Naive thymus-derived CD4-positive, alpha-beta T cell (primary cell): ENCODE measurements at regions of chr5 and their contacts with region 1.

Region 1: GRCh38 chr5:94849821-94850736 is 231.6 kb downstream of the SLF1 start:
- DNase-seq: peak in 7 of 9 donors; percentile 3 to 42 (median 10)
- ATAC-seq: peak; percentile 87
- H3K4me3 ChIP-seq: no peak overlapping the region
- H3K4me3 Mint-ChIP-seq: no peak overlapping the region
- H3K27ac ChIP-seq: no peak overlapping the region
- H3K27ac Mint-ChIP-seq: no peak overlapping the region
- H3K4me1 ChIP-seq: no peaks in the 10 kb centered on the region
- H3K4me1 Mint-ChIP-seq: peaks cover 0 to 11% (median 0%) of the 10 kb centered on the region in 7 donors
- H3K27me3 ChIP-seq: no peaks in the 10 kb centered on the region
- H3K27me3 Mint-ChIP-seq: peaks cover 0 to 8% (median 5%) of the 10 kb centered on the region in 5 donors

Region 2: GRCh38 chr5:93915142-93915553 is 934.9 kb before region 1 on chr5:
- CTCF ChIA-PET with region 1: no interaction called
- POLR2A ChIA-PET with region 1: no interaction called
- intact Hi-C with region 1: loop called in 1 of 2 experiments (anchors 10 kb)
- DNase-seq: peak in 6 of 9 donors; percentile 4 to 46 (median 29)
- ATAC-seq: peak; percentile 54
- H3K4me3 ChIP-seq: no peak overlapping the region
- H3K4me3 Mint-ChIP-seq: no peak overlapping the region
- H3K27ac ChIP-seq: no peak overlapping the region
- H3K27ac Mint-ChIP-seq: no peak overlapping the region
- H3K4me1 ChIP-seq: no peaks in the 10 kb centered on the region
- H3K4me1 Mint-ChIP-seq: peaks cover 0 to 5% (median 0%) of the 10 kb centered on the region in 7 donors
- H3K27me3 ChIP-seq: no peaks in the 10 kb centered on the region
- H3K27me3 Mint-ChIP-seq: peaks cover 0 to 2% (median 0%) of the 10 kb centered on the region in 5 donors

Region 3: DNA sequence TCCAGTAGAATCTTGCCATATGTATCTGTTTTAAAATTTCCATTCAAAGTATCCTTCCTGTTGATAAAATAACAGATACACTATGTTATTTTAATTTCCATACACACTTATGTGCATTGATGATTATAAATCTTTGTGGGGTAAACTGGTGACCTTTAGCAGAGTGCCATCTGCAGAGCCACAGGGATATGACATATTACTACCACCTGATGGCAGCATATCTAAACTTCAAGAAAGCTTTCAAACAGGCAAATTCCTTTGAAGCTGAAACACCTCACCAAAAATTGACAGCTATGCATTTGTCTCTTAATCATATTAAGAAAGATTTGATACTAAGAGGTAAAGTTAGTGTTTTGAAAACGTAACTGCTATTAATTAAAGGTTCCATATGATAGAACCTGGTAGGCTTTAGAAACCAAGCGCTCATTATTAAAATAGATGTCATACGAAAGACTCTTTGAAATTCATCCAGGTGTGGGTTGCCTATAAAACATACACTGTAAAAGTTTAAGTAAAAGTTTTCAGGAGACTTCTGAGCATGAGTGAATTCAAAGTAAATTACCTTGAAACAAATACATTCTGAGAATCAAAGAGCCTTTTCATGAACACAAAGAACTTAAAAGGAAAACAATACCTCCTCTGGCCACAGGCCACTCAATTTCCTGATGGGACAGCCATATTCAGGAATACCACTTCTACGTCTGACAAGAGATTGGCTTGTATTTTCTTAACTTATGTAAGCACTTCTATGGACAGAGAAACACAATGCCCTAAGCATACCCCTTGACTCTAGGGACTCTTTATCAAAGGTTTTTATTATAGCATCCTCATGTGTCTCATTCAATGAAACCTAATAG is 325.0 kb before region 1 on chr5:
- CTCF ChIA-PET with region 1: interaction called, 4 read pairs
- POLR2A ChIA-PET with region 1: no interaction called
- intact Hi-C with region 1: loop called in 1 of 2 experiments (anchors 1 kb)
- DNase-seq: peak in 7 of 9 donors; percentile 2 to 43 (median 27)
- ATAC-seq: peak; percentile 66
- H3K4me3 ChIP-seq: no peak overlapping the region
- H3K4me3 Mint-ChIP-seq: no peak overlapping the region
- H3K27ac ChIP-seq: no peak overlapping the region
- H3K27ac Mint-ChIP-seq: no peak overlapping the region
- H3K4me1 ChIP-seq: no peaks in the 10 kb centered on the region
- H3K4me1 Mint-ChIP-seq: peaks cover 0 to 3% (median 0%) of the 10 kb centered on the region in 7 donors
- H3K27me3 ChIP-seq: no peaks in the 10 kb centered on the region
- H3K27me3 Mint-ChIP-seq: peaks cover 0 to 5% (median 0%) of the 10 kb centered on the region in 5 donors

Region 4: GRCh38 chr5:94618493-94619328 is 231.4 kb before region 1 on chr5 and contains the starts of genes KIAA0825 and SLF1:
- CTCF ChIA-PET with region 1: no interaction called
- POLR2A ChIA-PET with region 1: no interaction called
- intact Hi-C with region 1: loop called in 1 of 2 experiments (anchors 5 kb)
- DNase-seq: peak; percentile 69 to 86 (median 83)
- ATAC-seq: peak; percentile 94
- H3K4me3 ChIP-seq: peak within 1 kb of the TSS; percentile 79
- H3K4me3 Mint-ChIP-seq: peak within 1 kb of the TSS; percentile 92 to 99 (median 96)
- H3K27ac ChIP-seq: peak within 1 kb of the TSS; percentile 63
- H3K27ac Mint-ChIP-seq: peak within 1 kb of the TSS; percentile 30 to 96 (median 89)
- H3K4me1 ChIP-seq: peaks cover 6 to 10% of the 10 kb centered on the region in 2 donors
- H3K4me1 Mint-ChIP-seq: peaks cover 18 to 47% (median 43%) of the 10 kb centered on the region in 7 donors
- H3K27me3 ChIP-seq: no peaks in the 10 kb centered on the region
- H3K27me3 Mint-ChIP-seq: no peaks in the 10 kb centered on the region
- total RNA-seq, gene KIAA0825: 1.2 to 3.2 (median 1.5) TPM
- total RNA-seq, gene SLF1: 6.7 to 13.4 (median 11.3) TPM

Region 5: GRCh38 chr5:94693043-94693822 is 156.8 kb before region 1 on chr5:
- CTCF ChIA-PET with region 1: no interaction called
- POLR2A ChIA-PET with region 1: no interaction called
- intact Hi-C with region 1: loop called in 1 of 2 experiments (anchors 5 kb)
- DNase-seq: peak in 2 of 9 donors; percentile 1 to 16
- ATAC-seq: peak; percentile 61
- H3K4me3 ChIP-seq: no peak overlapping the region
- H3K4me3 Mint-ChIP-seq: no peak overlapping the region
- H3K27ac ChIP-seq: no peak overlapping the region
- H3K27ac Mint-ChIP-seq: no peak overlapping the region
- H3K4me1 ChIP-seq: no peaks in the 10 kb centered on the region
- H3K4me1 Mint-ChIP-seq: peaks cover 0 to 3% (median 0%) of the 10 kb centered on the region in 7 donors
- H3K27me3 ChIP-seq: no peaks in the 10 kb centered on the region
- H3K27me3 Mint-ChIP-seq: no peaks in the 10 kb centered on the region

Region 6: GRCh38 chr5:94740286-94740685 is 109.8 kb before region 1 on chr5:
- CTCF ChIA-PET with region 1: no interaction called
- POLR2A ChIA-PET with region 1: no interaction called
- intact Hi-C with region 1: loop called in 1 of 2 experiments (anchors 1 kb)
- DNase-seq: no peak
- ATAC-seq: no peak
- H3K4me3 ChIP-seq: no peak overlapping the region
- H3K4me3 Mint-ChIP-seq: no peak overlapping the region
- H3K27ac ChIP-seq: no peak overlapping the region
- H3K27ac Mint-ChIP-seq: no peak overlapping the region
- H3K4me1 ChIP-seq: no peaks in the 10 kb centered on the region
- H3K4me1 Mint-ChIP-seq: peaks cover 0 to 2% (median 0%) of the 10 kb centered on the region in 7 donors
- H3K27me3 ChIP-seq: no peaks in the 10 kb centered on the region
- H3K27me3 Mint-ChIP-seq: peaks cover 0 to 9% (median 3%) of the 10 kb centered on the region in 5 donors

Region 7: GRCh38 chr5:94793113-94793815 is 56.8 kb before region 1 on chr5:
- CTCF ChIA-PET with region 1: no interaction called
- POLR2A ChIA-PET with region 1: no interaction called
- intact Hi-C with region 1: loop called in 1 of 2 experiments (anchors 2 kb)
- DNase-seq: peak in 6 of 9 donors; percentile 14 to 53 (median 30)
- ATAC-seq: peak; percentile 95
- H3K4me3 ChIP-seq: no peak overlapping the region
- H3K4me3 Mint-ChIP-seq: peak overlapping the region in 8 of 10 donors; percentile 17 to 74 (median 37)
- H3K27ac ChIP-seq: peak overlapping the region; percentile 24
- H3K27ac Mint-ChIP-seq: peak overlapping the region; percentile 22 to 97 (median 80)
- H3K4me1 ChIP-seq: peaks cover 16 to 29% of the 10 kb centered on the region in 2 donors
- H3K4me1 Mint-ChIP-seq: peaks cover 13 to 49% (median 35%) of the 10 kb centered on the region in 7 donors
- H3K27me3 ChIP-seq: no peaks in the 10 kb centered on the region
- H3K27me3 Mint-ChIP-seq: peaks cover 0 to 10% (median 0%) of the 10 kb centered on the region in 5 donors